MCF 10A (cell line): ENCODE measurements at regions of chr16 and their contacts with region 1.

Region 1: GRCh38 chr16:82263521-82264143 is 93.6 kb upstream of the MPHOSPH6 start:
- DNase-seq: peak; percentile 75
- H3K4me3 Mint-ChIP-seq: no peak overlapping the region
- H3K27ac Mint-ChIP-seq: no peak overlapping the region
- H3K4me1 Mint-ChIP-seq: no peaks in the 10 kb centered on the region
- H3K27me3 Mint-ChIP-seq: peaks cover 75% of the 10 kb centered on the region
- CTCF ChIP-seq: peak; percentile 91

Region 2: GRCh38 chr16:82240111-82240510 is 23.5 kb before region 1 on chr16:
- CTCF ChIA-PET with region 1: interaction called, 18 read pairs
- POLR2A ChIA-PET with region 1: no interaction called
- intact Hi-C with region 1: no loop called
- DNase-seq: no peak
- H3K4me3 Mint-ChIP-seq: no peak overlapping the region
- H3K27ac Mint-ChIP-seq: no peak overlapping the region
- H3K4me1 Mint-ChIP-seq: no peaks in the 10 kb centered on the region
- H3K27me3 Mint-ChIP-seq: peaks cover 76% of the 10 kb centered on the region
- CTCF ChIP-seq: no peak

Region 3: GRCh38 chr16:82293671-82294070 is 30.0 kb after region 1 on chr16:
- CTCF ChIA-PET with region 1: interaction called, 13 read pairs
- POLR2A ChIA-PET with region 1: interaction called, 4 read pairs
- intact Hi-C with region 1: no loop called
- DNase-seq: no peak
- H3K4me3 Mint-ChIP-seq: no peak overlapping the region
- H3K27ac Mint-ChIP-seq: no peak overlapping the region
- H3K4me1 Mint-ChIP-seq: no peaks in the 10 kb centered on the region
- H3K27me3 Mint-ChIP-seq: peaks cover 91% of the 10 kb centered on the region
- CTCF ChIP-seq: no peak

Region 4: DNA sequence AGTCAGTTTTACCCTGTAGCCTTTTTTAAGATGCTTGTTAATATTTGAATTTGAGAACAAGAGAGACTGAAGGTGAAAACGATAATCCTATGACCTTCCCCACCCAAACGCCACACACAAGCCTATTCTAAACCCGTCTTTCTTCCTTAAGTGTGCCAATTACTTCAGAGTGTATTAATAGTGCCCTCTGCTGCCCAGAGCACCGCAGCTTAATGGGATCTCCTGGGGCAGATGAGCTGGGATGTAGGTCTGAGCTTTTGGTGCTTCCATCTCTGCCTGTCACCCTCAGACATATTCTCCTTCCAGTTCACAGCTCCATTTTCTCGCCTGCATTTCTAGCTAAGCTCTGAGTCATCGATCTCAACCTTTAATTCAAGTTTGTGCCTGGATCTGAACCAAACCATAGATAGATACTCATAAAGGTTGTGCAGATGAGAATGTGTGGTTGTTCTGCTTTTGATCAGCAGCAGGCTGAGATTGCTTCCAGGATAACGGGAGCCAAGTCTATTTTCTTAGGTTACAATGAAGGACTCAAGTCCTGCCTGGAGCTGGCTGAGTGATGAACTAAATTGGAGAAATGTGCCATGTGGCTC is 316.8 kb after region 1 on chr16:
- CTCF ChIA-PET with region 1: interaction called, 78 read pairs
- POLR2A ChIA-PET with region 1: no interaction called
- intact Hi-C with region 1: loop called (anchors 1 kb)
- DNase-seq: peak; percentile 38
- H3K4me3 Mint-ChIP-seq: no peak overlapping the region
- H3K27ac Mint-ChIP-seq: no peak overlapping the region
- H3K4me1 Mint-ChIP-seq: no peaks in the 10 kb centered on the region
- H3K27me3 Mint-ChIP-seq: peaks cover 65% of the 10 kb centered on the region
- CTCF ChIP-seq: peak; percentile 30

Region 5: DNA sequence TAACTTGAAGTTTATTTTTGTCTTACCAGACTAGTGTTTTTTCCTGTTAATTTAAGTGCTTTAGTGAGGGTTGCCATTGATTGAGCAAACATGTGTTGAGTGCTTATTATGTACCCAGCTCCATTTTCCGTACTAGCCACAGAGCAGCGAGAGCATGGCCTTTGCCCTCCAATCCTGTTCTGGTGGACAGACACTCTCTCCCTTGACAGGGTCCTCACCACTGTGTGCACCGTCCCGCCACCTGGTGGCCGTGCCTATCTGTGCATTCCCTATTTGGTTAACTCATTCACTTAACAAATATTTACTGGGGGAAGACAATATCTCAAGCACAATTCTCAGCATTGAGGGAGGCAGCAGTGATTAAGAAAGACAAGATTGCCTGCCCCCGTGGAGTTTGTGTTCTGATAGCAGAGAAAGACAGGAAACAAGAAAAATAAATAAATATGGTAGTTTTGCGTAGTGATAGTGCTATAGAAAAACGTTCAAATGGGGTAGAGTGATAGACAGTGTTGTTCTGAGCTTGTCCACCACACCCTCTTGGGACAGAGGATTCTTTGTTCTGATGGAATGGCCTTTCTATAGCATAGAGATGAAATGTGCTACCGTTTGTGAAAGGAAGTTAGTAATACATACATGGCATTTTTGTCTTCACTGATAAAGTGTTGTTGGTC is 376.2 kb after region 1 on chr16:
- CTCF ChIA-PET with region 1: interaction called, 55 read pairs
- POLR2A ChIA-PET with region 1: no interaction called
- intact Hi-C with region 1: no loop called
- DNase-seq: peak; percentile 73
- H3K4me3 Mint-ChIP-seq: no peak overlapping the region
- H3K27ac Mint-ChIP-seq: no peak overlapping the region
- H3K4me1 Mint-ChIP-seq: peaks cover 36% of the 10 kb centered on the region
- H3K27me3 Mint-ChIP-seq: no peaks in the 10 kb centered on the region
- CTCF ChIP-seq: peak; percentile 82

Region 6: GRCh38 chr16:83449861-83450260 is 1186.2 kb after region 1 on chr16:
- CTCF ChIA-PET with region 1: interaction called, 37 read pairs
- POLR2A ChIA-PET with region 1: no interaction called
- intact Hi-C with region 1: loop called (anchors 2 kb)
- DNase-seq: no peak
- H3K4me3 Mint-ChIP-seq: no peak overlapping the region
- H3K27ac Mint-ChIP-seq: no peak overlapping the region
- H3K4me1 Mint-ChIP-seq: peaks cover 13% of the 10 kb centered on the region
- H3K27me3 Mint-ChIP-seq: no peaks in the 10 kb centered on the region
- CTCF ChIP-seq: no peak